Activated T-helper 1 cell treated with anti-CD3 and anti-CD28 coated beads, Interleukin-12 subunit alpha, Interleukin-12 subunit beta, Interleukin-2, Interleukin-4 antibody, amounts not matched to agents 30 ng/mL and 10 ng/mL and 1 ng/mL, durations not matched to agents 14 hours and 24 hours and 36 hours (primary cell): ENCODE measurements at regions of chr14 and their contacts with region 1.

Region 1: GRCh38 chr14:69726761-69727511 is 40.0 kb upstream of the SRSF5 start:
- DNase-seq: peak; percentile 76
- H3K4me3 Mint-ChIP-seq: peak overlapping the region; percentile 72
- H3K27ac Mint-ChIP-seq: peak overlapping the region; percentile 74
- H3K4me1 Mint-ChIP-seq: peaks cover 38% of the 10 kb centered on the region
- H3K27me3 Mint-ChIP-seq: no peaks in the 10 kb centered on the region

Region 2: GRCh38 chr14:69580009-69580577 is 146.8 kb before region 1 on chr14:
- intact Hi-C with region 1: loop called (anchors 1 kb)
- DNase-seq: no peak
- H3K4me3 Mint-ChIP-seq: no peak overlapping the region
- H3K27ac Mint-ChIP-seq: no peak overlapping the region
- H3K4me1 Mint-ChIP-seq: peaks cover 9% of the 10 kb centered on the region
- H3K27me3 Mint-ChIP-seq: peaks cover 38% of the 10 kb centered on the region

Region 3: GRCh38 chr14:69643443-69644164 is 83.3 kb before region 1 on chr14:
- intact Hi-C with region 1: no loop called
- DNase-seq: no peak
- H3K4me3 Mint-ChIP-seq: peak overlapping the region; percentile 7
- H3K27ac Mint-ChIP-seq: peak overlapping the region; percentile 83
- H3K4me1 Mint-ChIP-seq: peaks cover 72% of the 10 kb centered on the region
- H3K27me3 Mint-ChIP-seq: no peaks in the 10 kb centered on the region

Region 4: DNA sequence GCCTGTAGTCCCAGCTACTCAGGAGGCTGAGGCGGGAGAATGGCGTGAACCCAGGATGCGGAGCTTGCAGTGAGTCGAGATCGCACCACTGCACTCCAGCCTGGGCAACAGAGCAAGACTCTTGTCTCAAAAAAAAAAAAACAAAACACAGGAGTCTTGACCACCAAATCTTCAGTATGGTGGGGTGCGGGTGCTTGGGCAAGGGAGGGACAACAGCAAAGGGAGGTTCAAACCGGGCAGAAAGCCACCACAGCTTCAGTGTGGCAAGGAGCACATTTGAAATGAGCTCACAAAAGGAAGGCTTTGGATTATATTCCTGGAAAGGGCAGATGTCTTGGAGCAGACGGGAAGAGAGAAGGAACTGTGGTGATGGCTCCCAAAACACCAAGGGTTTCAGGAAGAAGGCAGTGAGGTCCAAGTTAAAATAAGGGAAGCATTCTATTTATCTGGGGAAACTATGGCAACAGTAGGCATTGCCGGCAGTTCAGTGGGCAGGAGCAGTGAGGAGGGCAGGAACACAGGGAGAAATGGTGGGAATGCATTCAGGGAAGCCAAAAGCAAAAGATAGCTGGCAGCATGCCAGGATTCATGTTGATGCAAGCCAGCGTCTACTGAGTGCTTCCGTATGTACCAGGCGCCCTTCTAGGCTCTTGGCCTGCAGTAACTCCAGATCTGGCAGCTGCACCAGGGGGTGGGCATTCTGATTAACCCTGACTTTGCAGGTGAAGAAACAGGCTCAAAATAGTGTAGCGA is 11.0 kb before region 1 on chr14:
- intact Hi-C with region 1: loop called (anchors 1 kb)
- DNase-seq: no peak
- H3K4me3 Mint-ChIP-seq: peak overlapping the region; percentile 46
- H3K27ac Mint-ChIP-seq: peak overlapping the region; percentile 92
- H3K4me1 Mint-ChIP-seq: peaks cover 94% of the 10 kb centered on the region
- H3K27me3 Mint-ChIP-seq: no peaks in the 10 kb centered on the region